Right ventricle myocardium superior (tissue), 1 donor: ENCODE measurements at regions of chr9 and their contacts with region 1.

Region 1: DNA sequence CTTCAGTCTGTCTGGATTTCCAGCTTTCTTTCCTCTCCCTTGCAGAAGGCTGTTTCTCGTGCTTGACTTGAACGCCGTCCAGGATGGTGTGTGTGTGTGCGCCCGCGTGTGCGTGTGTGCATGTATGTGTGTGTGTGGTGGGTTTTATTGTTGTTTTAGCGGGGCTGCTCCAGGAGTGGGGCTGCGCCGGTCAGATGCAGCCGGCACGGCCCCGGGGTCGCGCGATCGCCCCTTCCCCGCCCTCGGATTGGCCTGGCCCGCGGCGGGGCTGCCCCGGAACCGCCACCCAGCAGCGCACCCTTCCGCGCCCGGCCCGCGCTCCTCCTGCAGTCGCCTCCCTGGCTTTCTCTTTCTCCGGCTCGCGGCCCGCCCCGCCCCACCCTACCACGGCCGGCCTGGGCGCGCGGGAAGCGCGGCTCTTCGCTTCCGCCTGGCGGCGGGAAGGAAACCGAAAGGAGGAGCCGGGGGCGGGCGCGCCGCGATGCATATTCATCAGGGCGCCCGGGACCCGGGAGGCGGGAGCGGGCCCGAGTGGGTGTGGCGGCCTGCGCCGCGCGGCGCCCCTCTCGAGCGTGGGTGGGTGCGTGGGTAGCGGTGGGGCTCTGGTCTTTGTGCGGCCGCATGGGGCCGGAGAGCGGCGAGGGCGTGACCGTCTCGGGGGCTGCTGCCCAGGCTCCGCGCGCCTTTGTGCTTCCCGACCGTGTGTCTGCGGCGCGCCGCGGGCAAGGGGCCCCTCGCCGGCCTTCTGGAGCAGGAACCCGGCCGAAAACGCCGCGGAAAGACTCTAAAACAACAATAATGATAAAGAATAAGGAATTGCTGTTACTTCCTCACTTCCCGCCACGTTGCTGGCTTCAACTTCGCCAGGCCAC is 8.5 kb upstream of the NFIB start:
- DNase-seq: peak; percentile 95
- ATAC-seq: peak; percentile 94

Region 2: DNA sequence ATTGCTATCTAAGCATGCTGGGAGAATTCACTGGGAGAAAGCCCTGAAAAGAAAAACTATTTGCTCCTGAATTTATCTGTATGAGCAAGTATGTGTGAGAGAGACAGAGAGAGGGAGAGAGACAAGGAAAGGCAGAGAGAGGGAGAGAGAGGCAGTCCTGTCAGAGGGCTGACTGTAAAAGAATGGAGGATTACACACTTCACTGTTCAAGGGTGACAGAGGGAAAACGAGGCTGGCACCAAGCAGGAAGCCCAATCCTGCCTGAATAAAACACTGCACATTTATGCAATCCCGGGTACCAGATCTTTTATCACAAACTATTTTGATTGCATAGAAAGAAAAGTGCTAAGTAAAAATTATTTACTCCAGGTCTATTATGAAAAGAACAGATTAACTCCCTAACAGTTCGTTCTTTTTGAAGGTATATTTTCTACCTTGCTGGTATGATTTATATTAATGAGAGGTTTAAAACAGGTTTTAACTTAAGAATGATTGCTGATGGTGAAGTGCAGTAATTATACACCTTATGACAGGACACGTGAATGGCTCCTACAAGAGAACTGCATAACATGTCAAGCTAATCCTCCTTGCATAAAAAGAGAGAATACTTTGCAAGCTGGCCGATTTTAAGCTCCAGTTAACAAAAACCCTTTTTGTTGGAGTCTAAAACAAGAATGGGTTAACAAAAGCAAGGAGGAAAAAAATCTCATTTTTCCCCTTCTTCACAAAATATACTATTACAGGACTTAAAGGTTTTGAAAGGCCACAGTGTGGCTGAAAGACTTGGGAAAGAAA is 91.1 kb before region 1 on chr9:
- intact Hi-C with region 1: no loop called
- DNase-seq: no peak
- ATAC-seq: no peak

Region 3: GRCh38 chr9:14347406-14348122 is 25.1 kb after region 1 on chr9:
- intact Hi-C with region 1: loop called (anchors 2 kb)
- DNase-seq: peak; percentile 70
- ATAC-seq: peak; percentile 55

Region 4: DNA sequence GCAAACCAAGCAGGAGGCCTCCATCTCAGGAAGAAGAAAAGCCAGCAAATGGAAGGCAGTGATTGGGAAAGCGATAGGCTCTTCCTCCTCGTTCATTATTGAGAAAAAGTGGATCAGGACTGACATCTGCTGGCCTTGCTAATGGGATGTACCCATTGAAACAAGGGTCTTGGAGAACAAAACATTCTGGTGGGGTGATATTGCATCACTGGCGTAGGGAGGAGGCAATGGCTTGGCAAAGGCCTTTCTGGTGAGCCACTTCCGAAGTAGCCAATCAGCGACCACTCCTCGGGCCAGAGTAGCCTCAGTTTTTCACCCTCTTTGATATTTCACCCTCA is 78.2 kb after region 1 on chr9:
- intact Hi-C with region 1: no loop called
- DNase-seq: peak; percentile 52
- ATAC-seq: peak; percentile 90